ENCODE measurements at regions of chr19 and their contacts with region 1.

Region 1: DNA sequence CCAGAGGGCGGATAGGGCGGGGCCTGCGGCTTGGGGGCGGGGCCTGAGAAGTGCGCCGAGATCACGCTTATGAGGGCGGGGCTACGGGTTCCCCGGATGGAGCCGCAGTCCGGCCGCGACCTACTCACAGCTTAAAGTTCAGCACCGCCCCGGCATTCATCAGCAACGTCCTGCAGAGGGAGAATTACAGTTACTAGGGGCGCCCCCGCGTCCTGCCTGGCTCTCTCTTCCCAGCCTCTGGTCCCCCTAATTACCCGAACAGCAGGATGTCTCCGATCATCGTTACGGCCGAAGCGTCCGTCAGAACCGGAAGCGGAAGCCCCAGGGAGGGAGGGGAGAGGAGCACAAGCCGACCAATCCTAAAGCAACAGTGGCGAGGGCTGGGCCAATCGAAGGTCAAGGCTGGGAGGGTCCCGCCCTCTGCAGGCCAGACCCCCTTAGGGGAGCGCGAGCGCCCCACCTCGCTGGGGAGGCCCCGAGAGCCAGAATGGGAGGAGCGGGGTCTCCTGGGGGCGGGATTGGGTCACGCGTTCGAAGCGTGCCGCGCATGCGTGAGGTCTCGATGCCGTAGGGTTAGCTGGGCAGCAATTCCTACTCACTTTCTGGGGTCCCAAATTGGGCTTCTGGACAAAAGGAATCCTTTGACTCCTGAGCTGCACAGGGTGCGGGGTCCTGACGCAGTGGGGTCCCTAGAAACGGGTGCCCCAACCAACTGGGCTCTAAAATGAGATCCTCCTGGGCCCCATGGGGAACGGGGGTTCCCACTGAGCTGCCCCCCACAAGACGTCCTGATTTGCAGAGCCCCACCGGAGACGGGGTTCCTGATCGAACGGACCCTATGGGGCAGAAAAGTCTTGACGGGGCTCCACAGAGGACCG is at the start of gene SMIM7:
- DNase-seq: peak; percentile 99
- ATAC-seq: peak; percentile 99
- H3K4me3 ChIP-seq: peak within 1 kb of the TSS; percentile 61 to 63
- H3K27ac ChIP-seq: peak within 1 kb of the TSS in 1 of 2 donors; percentile 64
- H3K4me1 ChIP-seq: no peaks in the 10 kb centered on the region
- H3K27me3 ChIP-seq: no peaks in the 10 kb centered on the region
- total RNA-seq, gene SMIM7: 46.9 to 70.8 TPM

Region 2: DNA sequence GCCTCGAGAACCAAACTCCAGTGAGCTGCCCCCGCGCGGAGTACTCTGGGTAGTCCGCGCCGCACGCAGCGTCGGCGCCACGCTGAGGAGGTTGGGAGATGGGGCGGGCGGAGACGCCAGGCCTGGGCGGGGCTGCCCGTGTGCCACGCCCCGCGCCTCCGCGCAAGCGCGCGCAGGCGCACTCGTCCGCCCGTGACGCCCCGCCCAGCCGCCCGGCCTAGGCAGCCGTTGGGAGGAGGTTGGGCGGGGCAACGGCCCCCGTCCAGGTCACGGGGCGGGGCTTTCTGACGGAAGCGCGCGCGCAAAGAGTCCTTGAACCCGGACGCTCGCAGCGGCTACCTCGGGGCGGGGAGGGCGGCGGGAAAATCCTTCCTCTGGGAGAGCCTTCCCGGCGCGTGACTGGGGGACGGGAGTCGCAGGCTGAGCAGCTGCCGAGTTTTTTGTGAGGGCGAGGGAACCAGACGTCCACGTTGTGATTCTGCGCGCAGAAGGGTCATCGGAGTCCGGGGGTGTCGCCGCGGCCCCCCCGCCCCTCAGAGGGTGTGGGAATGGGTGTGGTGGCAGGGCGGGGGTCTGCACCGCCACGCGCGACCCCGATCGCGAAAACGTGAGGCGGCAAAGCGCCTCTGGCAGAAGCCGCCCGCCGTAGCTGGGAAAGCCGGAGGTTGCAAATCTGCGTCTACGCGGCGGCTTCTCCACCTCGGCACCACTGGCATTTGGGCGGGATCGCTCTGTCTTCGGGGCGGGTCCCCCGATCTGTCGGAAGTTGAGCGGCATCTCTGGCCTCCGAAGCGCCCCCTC is 31.7 kb before region 1 on chr19 and contains the start of gene MED26:
- intact Hi-C with region 1: loop called in 1 of 2 experiments (anchors 1 kb)
- DNase-seq: peak; percentile 96 to 99
- ATAC-seq: peak; percentile 99
- H3K4me3 ChIP-seq: peak within 1 kb of the TSS; percentile 88 to 96
- H3K27ac ChIP-seq: peak within 1 kb of the TSS in 1 of 2 donors; percentile 38
- H3K4me1 ChIP-seq: no peaks in the 10 kb centered on the region
- H3K27me3 ChIP-seq: no peaks in the 10 kb centered on the region
- total RNA-seq, gene MED26: 8.0 to 8.4 TPM

Region 3: DNA sequence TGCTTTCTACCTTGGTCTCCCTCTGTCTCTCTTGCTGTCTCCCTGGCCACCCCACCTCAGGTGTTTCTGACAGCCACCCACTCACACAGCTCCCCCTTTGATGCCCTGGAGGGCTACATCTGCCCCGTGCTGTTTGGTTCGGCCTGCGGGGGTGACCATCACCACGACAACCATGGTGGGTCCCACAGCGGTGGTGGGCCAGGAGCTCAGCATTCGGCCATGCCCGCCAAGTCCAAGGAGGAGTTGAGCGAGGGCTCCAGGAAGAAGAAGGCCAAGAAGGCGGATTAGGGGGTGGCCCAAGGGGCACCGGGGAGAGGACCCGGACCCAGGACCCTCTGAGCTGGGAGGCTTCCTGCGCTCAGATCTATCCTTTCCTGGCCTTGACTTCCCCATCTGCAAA is 28.0 kb after region 1 on chr19:
- intact Hi-C with region 1: no loop called
- DNase-seq: no peak
- ATAC-seq: no peak
- H3K4me3 ChIP-seq: no peak overlapping the region
- H3K27ac ChIP-seq: no peak overlapping the region
- H3K4me1 ChIP-seq: no peaks in the 10 kb centered on the region
- H3K27me3 ChIP-seq: no peaks in the 10 kb centered on the region

Measured in aorta (tissue), 5 donors.